ENCODE measurements at regions of chr2 and their contacts with region 1.

Region 1: GRCh38 chr2:25700221-25700660 is 26.9 kb upstream of the DTNB start:
- DNase-seq: peak; percentile 51
- ATAC-seq: peak; percentile 57
- H3K4me3 ChIP-seq: no peak overlapping the region
- H3K4me3 Mint-ChIP-seq: no peak overlapping the region
- H3K27ac ChIP-seq: no peak overlapping the region
- H3K27ac Mint-ChIP-seq: no peak overlapping the region
- H3K4me1 ChIP-seq: no peaks in the 10 kb centered on the region
- H3K4me1 Mint-ChIP-seq: peaks cover 2% of the 10 kb centered on the region
- H3K27me3 ChIP-seq: no peaks in the 10 kb centered on the region
- H3K27me3 Mint-ChIP-seq: no peaks in the 10 kb centered on the region
- CTCF ChIP-seq: peak; percentile 80

Region 2: GRCh38 chr2:25151718-25152117 is 548.5 kb before region 1 on chr2:
- CTCF ChIA-PET with region 1: no interaction called
- POLR2A ChIA-PET with region 1: no interaction called
- intact Hi-C with region 1: no loop called
- DNase-seq: no peak
- ATAC-seq: no peak
- H3K4me3 ChIP-seq: no peak overlapping the region
- H3K4me3 Mint-ChIP-seq: no peak overlapping the region
- H3K27ac ChIP-seq: no peak overlapping the region
- H3K27ac Mint-ChIP-seq: no peak overlapping the region
- H3K4me1 ChIP-seq: no peaks in the 10 kb centered on the region
- H3K4me1 Mint-ChIP-seq: no peaks in the 10 kb centered on the region
- H3K27me3 ChIP-seq: peaks cover 0 to 2% (median 0%) of the 10 kb centered on the region in 4 experiments
- H3K27me3 Mint-ChIP-seq: no peaks in the 10 kb centered on the region
- CTCF ChIP-seq: no peak

Region 3: GRCh38 chr2:25582077-25582830 is 118.0 kb before region 1 on chr2:
- CTCF ChIA-PET with region 1: no interaction called
- POLR2A ChIA-PET with region 1: no interaction called
- intact Hi-C with region 1: no loop called
- DNase-seq: peak; percentile 42
- ATAC-seq: peak; percentile 76
- H3K4me3 ChIP-seq: no peak overlapping the region
- H3K4me3 Mint-ChIP-seq: no peak overlapping the region
- H3K27ac ChIP-seq: no peak overlapping the region
- H3K27ac Mint-ChIP-seq: no peak overlapping the region
- H3K4me1 ChIP-seq: peaks cover 13 to 16% of the 10 kb centered on the region in 2 donors
- H3K4me1 Mint-ChIP-seq: peaks cover 21% of the 10 kb centered on the region
- H3K27me3 ChIP-seq: no peaks in the 10 kb centered on the region
- H3K27me3 Mint-ChIP-seq: no peaks in the 10 kb centered on the region
- CTCF ChIP-seq: no peak

Region 4: DNA sequence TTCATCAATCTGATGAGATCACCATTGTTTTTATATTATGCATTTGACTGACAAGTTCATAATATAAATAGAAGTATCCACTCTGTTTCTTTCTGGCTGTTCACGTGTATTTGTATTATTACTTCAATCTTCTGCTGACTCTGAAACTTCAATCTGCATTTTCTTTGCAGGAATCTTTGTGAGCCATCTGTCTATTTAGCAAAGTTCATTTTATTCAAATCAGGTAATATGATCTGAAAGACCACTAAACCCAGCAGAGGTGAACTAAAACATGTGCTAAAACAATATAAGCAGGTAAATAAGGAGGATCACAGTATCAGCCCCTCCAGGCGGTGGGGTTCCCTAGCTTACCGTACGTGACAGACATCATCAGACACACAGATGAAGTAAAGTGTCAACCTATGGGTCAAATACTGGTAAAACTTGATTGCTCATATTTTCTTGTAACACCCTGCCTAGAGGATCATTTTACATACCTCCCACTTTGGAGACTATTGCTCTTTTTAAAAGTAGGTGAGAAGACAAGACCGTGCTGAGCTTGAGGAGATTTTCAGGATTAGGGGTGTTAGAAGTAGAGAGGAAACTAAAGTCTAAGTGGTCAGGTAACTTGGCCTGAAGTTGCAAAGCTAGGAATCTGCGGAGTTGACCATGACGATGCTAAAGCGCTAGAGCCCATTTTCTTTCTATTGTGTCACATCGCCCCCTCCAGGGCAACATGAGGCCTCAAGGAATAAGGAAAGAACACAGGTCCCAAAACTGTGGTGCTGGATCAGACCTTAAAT is 35.9 kb before region 1 on chr2:
- CTCF ChIA-PET with region 1: interaction called, 10 read pairs
- POLR2A ChIA-PET with region 1: no interaction called
- intact Hi-C with region 1: no loop called
- DNase-seq: peak; percentile 61
- ATAC-seq: peak; percentile 43
- H3K4me3 ChIP-seq: peak overlapping the region in 1 of 5 experiments; percentile 27
- H3K4me3 Mint-ChIP-seq: peak overlapping the region; percentile 64
- H3K27ac ChIP-seq: no peak overlapping the region
- H3K27ac Mint-ChIP-seq: no peak overlapping the region
- H3K4me1 ChIP-seq: peaks cover 0 to 8% of the 10 kb centered on the region in 2 donors
- H3K4me1 Mint-ChIP-seq: peaks cover 4% of the 10 kb centered on the region
- H3K27me3 ChIP-seq: no peaks in the 10 kb centered on the region
- H3K27me3 Mint-ChIP-seq: no peaks in the 10 kb centered on the region
- CTCF ChIP-seq: peak; percentile 62

Region 5: DNA sequence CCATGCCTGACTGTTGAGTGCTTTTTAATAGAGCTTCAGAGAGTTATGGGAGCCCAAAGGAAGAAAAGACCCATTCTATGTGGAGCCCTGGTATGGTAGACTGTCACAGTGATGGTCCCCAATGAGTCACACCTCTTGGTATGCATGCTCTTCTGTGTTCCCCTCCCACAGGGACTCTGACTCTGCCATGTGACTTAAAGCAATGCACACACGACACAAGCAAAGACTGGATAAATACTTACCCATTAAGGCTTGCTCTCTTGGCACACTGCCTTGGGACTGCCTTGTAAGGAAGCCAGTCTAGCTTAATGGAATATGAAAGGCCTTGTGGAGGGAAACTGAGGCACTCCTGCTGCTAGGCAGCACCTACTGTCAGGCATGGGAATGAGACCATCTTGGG is 10.2 kb before region 1 on chr2:
- CTCF ChIA-PET with region 1: interaction called, 25 read pairs
- POLR2A ChIA-PET with region 1: no interaction called
- intact Hi-C with region 1: no loop called
- DNase-seq: no peak
- ATAC-seq: no peak
- H3K4me3 ChIP-seq: no peak overlapping the region
- H3K4me3 Mint-ChIP-seq: no peak overlapping the region
- H3K27ac ChIP-seq: no peak overlapping the region
- H3K27ac Mint-ChIP-seq: no peak overlapping the region
- H3K4me1 ChIP-seq: no peaks in the 10 kb centered on the region
- H3K4me1 Mint-ChIP-seq: no peaks in the 10 kb centered on the region
- H3K27me3 ChIP-seq: peaks cover 0 to 3% (median 0%) of the 10 kb centered on the region in 4 experiments
- H3K27me3 Mint-ChIP-seq: peaks cover 7% of the 10 kb centered on the region
- CTCF ChIP-seq: no peak

Region 6: GRCh38 chr2:25710750-25711149 is 10.5 kb after region 1 on chr2:
- CTCF ChIA-PET with region 1: interaction called, 10 read pairs
- POLR2A ChIA-PET with region 1: no interaction called
- intact Hi-C with region 1: no loop called
- DNase-seq: no peak
- ATAC-seq: no peak
- H3K4me3 ChIP-seq: no peak overlapping the region
- H3K4me3 Mint-ChIP-seq: no peak overlapping the region
- H3K27ac ChIP-seq: no peak overlapping the region
- H3K27ac Mint-ChIP-seq: no peak overlapping the region
- H3K4me1 ChIP-seq: peaks cover 5 to 11% of the 10 kb centered on the region in 2 donors
- H3K4me1 Mint-ChIP-seq: peaks cover 12% of the 10 kb centered on the region
- H3K27me3 ChIP-seq: peaks cover 0 to 6% (median 1%) of the 10 kb centered on the region in 4 experiments
- H3K27me3 Mint-ChIP-seq: peaks cover 14% of the 10 kb centered on the region
- CTCF ChIP-seq: no peak

Region 7: GRCh38 chr2:27152102-27152785 is 1452.0 kb after region 1 on chr2:
- CTCF ChIA-PET with region 1: no interaction called
- POLR2A ChIA-PET with region 1: interaction called, 12 read pairs
- intact Hi-C with region 1: no loop called
- DNase-seq: no peak
- ATAC-seq: no peak
- H3K4me3 ChIP-seq: no peak overlapping the region
- H3K4me3 Mint-ChIP-seq: no peak overlapping the region
- H3K27ac ChIP-seq: no peak overlapping the region
- H3K27ac Mint-ChIP-seq: no peak overlapping the region
- H3K4me1 ChIP-seq: no peaks in the 10 kb centered on the region
- H3K4me1 Mint-ChIP-seq: no peaks in the 10 kb centered on the region
- H3K27me3 ChIP-seq: peaks cover 0 to 7% (median 0%) of the 10 kb centered on the region in 4 experiments
- H3K27me3 Mint-ChIP-seq: peaks cover 9% of the 10 kb centered on the region
- CTCF ChIP-seq: no peak

Measured in B cell (primary cell).